Transverse colon (tissue), 4 donors: ENCODE measurements at regions of chr15 and their contacts with region 1.

Region 1: DNA sequence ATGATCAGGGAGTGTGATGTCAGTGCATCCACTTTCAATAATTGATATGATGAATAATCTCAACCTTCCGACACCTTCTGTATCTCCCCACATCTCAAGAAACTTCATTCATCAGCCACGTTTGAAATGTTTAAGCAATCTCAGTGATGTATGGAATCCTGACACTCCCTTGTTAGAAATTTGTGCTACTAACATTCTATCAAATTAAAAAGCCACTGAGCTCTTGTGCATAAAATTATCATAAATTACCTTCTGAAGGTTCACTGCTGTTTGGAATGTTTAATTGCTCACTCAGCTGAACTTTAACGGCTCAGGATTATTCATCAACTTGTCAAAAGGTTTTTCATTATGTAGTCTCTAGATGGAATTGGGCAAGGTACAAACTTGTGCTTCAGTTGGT is 108.4 kb upstream of the DPH6 start:
- DNase-seq: no peak
- H3K4me3 ChIP-seq: no peak overlapping the region
- H3K27ac ChIP-seq: no peak overlapping the region
- H3K4me1 ChIP-seq: no peaks in the 10 kb centered on the region
- H3K27me3 ChIP-seq: no peaks in the 10 kb centered on the region
- CTCF ChIP-seq: no peak
- EP300 ChIP-seq: no peak
- POLR2A ChIP-seq: no peak

Region 2: DNA sequence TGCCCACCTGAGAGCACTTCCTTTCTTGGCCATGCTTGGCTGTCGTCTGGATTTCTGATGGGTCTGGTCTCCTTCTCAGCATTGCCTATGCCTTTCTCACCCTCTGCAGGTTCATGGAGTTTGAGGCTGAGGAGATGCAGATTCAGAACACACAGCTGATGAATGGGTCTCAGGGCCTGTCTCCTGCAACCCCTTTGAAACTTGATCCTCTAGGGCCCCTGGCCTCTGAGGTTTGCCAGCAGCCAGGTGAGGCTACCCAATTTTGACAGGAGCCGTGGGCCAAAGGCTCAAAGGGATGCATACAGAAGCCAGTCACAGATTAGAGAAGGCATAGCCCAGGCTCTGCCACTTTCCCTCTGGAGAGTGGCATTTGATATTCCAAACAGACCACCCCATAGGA is 1300.7 kb before region 1 on chr15:
- in situ Hi-C with region 1: no loop called
- intact Hi-C with region 1: loop called (anchors 5 kb)
- DNase-seq: no peak
- H3K4me3 ChIP-seq: no peak overlapping the region
- H3K27ac ChIP-seq: no peak overlapping the region
- H3K4me1 ChIP-seq: no peaks in the 10 kb centered on the region
- H3K27me3 ChIP-seq: no peaks in the 10 kb centered on the region
- CTCF ChIP-seq: no peak
- EP300 ChIP-seq: no peak
- POLR2A ChIP-seq: no peak

Region 3: GRCh38 chr15:35665896-35666536 is 11.7 kb after region 1 on chr15:
- in situ Hi-C with region 1: no loop called
- intact Hi-C with region 1: no loop called
- DNase-seq: no peak
- H3K4me3 ChIP-seq: no peak overlapping the region
- H3K27ac ChIP-seq: peak overlapping the region in 1 of 4 donors; percentile 12
- H3K4me1 ChIP-seq: peaks cover 0 to 20% (median 4%) of the 10 kb centered on the region in 4 donors
- H3K27me3 ChIP-seq: no peaks in the 10 kb centered on the region
- CTCF ChIP-seq: no peak
- EP300 ChIP-seq: no peak
- POLR2A ChIP-seq: no peak

Region 4: DNA sequence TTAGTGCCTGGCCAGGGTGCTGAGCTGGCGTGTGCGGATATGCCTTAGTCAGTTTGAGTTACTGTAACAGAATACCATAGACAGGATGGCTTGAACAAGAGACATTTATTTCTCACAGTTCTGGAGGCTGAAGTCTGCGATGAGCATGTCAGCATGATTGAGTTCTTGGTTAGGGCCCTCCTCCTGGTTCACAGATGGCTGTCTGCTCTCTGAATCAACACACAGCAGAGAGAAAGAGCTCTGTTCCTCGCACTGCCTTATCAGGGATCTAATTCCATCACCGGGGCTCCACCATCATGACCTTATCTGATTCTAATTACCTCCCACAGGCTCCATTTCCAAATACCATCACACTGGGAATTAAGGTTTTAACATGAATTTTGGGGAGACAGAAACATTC is 278.2 kb after region 1 on chr15:
- in situ Hi-C with region 1: no loop called
- intact Hi-C with region 1: no loop called
- DNase-seq: no peak
- H3K4me3 ChIP-seq: no peak overlapping the region
- H3K27ac ChIP-seq: no peak overlapping the region
- H3K4me1 ChIP-seq: no peaks in the 10 kb centered on the region
- H3K27me3 ChIP-seq: no peaks in the 10 kb centered on the region
- CTCF ChIP-seq: no peak
- EP300 ChIP-seq: no peak
- POLR2A ChIP-seq: no peak